HepG2 (cell line): ENCODE measurements at regions of chr19 and their contacts with region 1.

Region 1: DNA sequence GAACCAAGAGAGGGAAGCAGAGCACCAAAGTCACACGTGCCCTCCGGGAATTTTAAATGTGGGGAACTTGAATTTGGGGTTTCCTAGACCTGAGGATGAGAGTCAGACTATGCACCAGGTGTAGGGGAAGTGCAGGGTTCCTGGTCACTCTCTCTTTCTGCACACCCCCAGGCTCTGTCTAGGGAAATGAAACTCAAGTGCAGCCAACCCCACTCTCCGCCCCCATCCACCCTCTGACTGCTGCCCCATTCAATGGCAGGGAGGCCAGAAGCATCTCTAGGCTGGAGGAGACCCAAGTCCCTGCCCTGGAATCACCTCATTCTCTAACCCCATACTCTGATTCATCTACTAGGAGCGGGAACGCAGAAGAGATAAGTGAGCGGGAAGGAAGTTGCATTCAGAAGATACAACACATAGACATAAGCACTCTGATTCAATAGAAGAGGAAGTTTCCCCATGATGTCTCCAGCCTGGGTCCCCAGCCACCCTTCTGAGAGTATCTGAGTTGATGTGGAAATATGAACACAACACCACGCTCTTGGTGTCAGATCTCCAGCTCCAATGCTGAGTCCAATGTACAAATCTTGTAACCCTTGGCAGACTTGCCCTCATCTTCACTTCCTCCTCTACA is 4.7 kb upstream of the SIGLEC14 start:
- DNase-seq: no peak
- ATAC-seq: no peak
- H3K4me3 ChIP-seq: no peak overlapping the region
- H3K27ac ChIP-seq: no peak overlapping the region
- H3K4me1 ChIP-seq: no peaks in the 10 kb centered on the region
- H3K27me3 ChIP-seq: no peaks in the 10 kb centered on the region
- CTCF ChIP-seq: no peak
- EP300 ChIP-seq: no peak
- POLR2A ChIP-seq: no peak
- RAD21 ChIP-seq: no peak

Region 2: GRCh38 chr19:51427201-51427600 is 224.1 kb before region 1 on chr19:
- CTCF ChIA-PET with region 1: no interaction called
- POLR2A ChIA-PET with region 1: no interaction called
- in situ Hi-C with region 1: no loop called
- intact Hi-C with region 1: loop called (anchors 5 kb)
- DNase-seq: no peak
- ATAC-seq: no peak
- H3K4me3 ChIP-seq: no peak overlapping the region
- H3K27ac ChIP-seq: no peak overlapping the region
- H3K4me1 ChIP-seq: no peaks in the 10 kb centered on the region
- H3K27me3 ChIP-seq: no peaks in the 10 kb centered on the region; a peak in 2 of 5 replicates
- CTCF ChIP-seq: no peak
- EP300 ChIP-seq: no peak
- POLR2A ChIP-seq: no peak
- RAD21 ChIP-seq: no peak

Region 3: DNA sequence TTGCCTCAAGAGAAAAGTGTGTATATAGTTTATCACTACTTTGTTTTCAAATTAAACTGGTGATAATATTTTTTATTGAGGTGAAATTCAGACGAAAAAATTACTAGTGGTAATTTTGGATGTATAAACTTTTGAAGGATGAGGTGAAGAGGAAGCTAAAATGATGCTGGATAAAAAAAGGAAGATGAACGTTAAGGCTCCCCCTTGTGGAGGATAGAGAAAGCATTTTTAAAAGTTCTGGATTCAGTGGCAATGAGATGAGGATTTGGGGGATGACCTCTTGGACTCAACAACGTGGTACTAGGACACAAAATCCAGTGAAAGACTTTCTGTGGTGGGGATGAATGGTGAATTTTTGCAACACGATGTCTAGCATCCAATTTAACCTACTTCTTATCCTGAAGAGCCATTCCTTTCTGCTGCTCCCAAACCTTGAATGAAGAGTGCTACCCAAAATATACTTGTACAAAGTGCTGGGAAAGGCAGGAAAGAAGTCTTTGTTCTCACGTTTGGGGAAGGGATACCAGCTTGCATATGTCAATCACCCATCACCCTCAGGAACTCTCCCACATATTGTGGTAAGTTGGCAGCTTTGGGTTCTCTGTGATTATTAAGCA is 13.9 kb before region 1 on chr19:
- CTCF ChIA-PET with region 1: no interaction called
- POLR2A ChIA-PET with region 1: no interaction called
- in situ Hi-C with region 1: no loop called
- intact Hi-C with region 1: no loop called
- DNase-seq: peak; percentile 33
- ATAC-seq: no peak
- H3K4me3 ChIP-seq: no peak overlapping the region
- H3K27ac ChIP-seq: no peak overlapping the region
- H3K4me1 ChIP-seq: no peaks in the 10 kb centered on the region
- H3K27me3 ChIP-seq: no peaks in the 10 kb centered on the region
- CTCF ChIP-seq: peak; percentile 53
- EP300 ChIP-seq: no peak
- POLR2A ChIP-seq: no peak
- RAD21 ChIP-seq: no peak

Region 4: GRCh38 chr19:51810228-51810627 is 158.9 kb after region 1 on chr19:
- CTCF ChIA-PET with region 1: no interaction called
- POLR2A ChIA-PET with region 1: no interaction called
- in situ Hi-C with region 1: no loop called
- intact Hi-C with region 1: no loop called
- DNase-seq: peak; percentile 68
- ATAC-seq: no peak
- H3K4me3 ChIP-seq: no peak overlapping the region
- H3K27ac ChIP-seq: no peak overlapping the region
- H3K4me1 ChIP-seq: peaks cover 49% of the 10 kb centered on the region
- H3K27me3 ChIP-seq: no peaks in the 10 kb centered on the region
- CTCF ChIP-seq: peak; percentile 42
- EP300 ChIP-seq: no peak
- POLR2A ChIP-seq: no peak
- RAD21 ChIP-seq: no peak

Region 5: DNA sequence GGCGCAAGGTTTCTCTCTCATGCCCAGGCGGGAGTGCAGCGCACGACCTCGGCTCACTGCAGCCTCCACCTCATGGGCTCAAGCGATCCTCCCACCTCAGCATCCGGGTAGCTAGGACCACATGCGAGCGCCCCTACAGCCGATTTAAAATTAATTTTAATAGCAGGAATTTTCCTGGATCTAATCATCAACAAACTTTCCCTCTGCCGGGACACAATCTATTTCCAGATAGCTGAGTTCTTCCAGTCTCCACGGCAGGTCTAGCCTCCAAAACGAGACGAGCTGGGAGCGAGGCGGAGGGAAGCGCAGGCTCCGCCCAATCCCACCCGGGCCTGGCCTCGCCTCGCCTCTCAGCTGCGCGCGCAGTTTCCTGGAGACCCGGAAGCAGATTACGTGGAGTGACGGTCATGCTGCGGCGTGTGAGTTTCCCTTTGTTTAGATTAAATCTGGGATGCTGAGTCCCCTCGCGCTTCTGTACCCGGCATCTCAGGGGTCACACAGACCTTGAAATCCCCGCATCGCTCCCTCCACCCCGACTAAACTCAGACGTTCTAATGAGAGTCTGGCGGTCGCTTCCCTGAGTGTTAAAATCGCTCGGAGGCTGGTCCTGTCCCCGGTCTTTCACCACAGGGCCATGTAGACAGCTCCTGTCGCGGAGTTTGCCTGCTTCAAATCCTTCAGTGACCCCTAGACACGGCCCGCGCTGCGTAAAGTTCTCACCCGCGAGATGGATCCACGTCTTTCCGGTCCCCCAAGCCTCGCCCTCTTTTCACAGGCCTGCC is 718.4 kb after region 1 on chr19 and contains the start of gene ZNF880:
- CTCF ChIA-PET with region 1: no interaction called
- POLR2A ChIA-PET with region 1: no interaction called
- in situ Hi-C with region 1: no loop called
- intact Hi-C with region 1: no loop called
- DNase-seq: no peak
- ATAC-seq: no peak
- H3K4me3 ChIP-seq: no peak within 1 kb of the TSS
- H3K27ac ChIP-seq: no peak within 1 kb of the TSS
- H3K4me1 ChIP-seq: no peaks in the 10 kb centered on the region
- H3K27me3 ChIP-seq: no peaks in the 10 kb centered on the region
- CTCF ChIP-seq: no peak
- EP300 ChIP-seq: no peak
- POLR2A ChIP-seq: no peak
- RAD21 ChIP-seq: no peak
- total RNA-seq, gene ZNF880: 0.18 TPM in 1 of 2 replicates, not detected in the other